Posterior vena cava (tissue), 2 donors: ENCODE measurements at regions of chr21 and their contacts with region 1.

Region 1: GRCh38 chr21:32834916-32835235 is 63.3 kb upstream of the PAXBP1 start:
- DNase-seq: no peak

Region 2: GRCh38 chr21:33042812-33043211 is 207.9 kb after region 1 on chr21:
- intact Hi-C with region 1: no loop called
- DNase-seq: no peak

Region 3: GRCh38 chr21:33139084-33139483 is 304.2 kb after region 1 on chr21:
- intact Hi-C with region 1: no loop called
- DNase-seq: no peak

Region 4: DNA sequence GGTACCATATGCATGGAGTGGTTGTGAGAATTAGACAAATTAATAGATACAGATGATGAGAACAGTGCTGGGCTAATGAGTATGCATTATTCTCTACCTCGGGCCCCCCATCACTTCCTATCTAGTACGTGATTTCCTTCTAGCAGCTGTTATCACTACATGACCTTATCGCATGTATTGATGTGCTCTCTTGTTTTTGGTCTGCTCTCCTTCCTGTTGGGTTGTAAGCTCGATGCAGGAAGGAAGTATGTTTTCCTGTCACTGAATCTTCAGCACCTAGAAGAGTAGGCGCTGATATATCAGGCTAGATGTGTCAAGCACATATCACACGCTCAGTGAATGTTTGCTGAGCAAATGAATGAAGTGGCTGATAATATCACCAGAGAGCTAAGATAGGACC is 351.0 kb after region 1 on chr21:
- intact Hi-C with region 1: loop called in 1 of 2 experiments (anchors 10 kb)
- DNase-seq: no peak

Region 5: GRCh38 chr21:34592120-34592955 is 1757.5 kb after region 1 on chr21:
- intact Hi-C with region 1: loop called in 1 of 2 experiments (anchors 5 kb)
- DNase-seq: no peak